Heart right ventricle (tissue), 16 donors: ENCODE measurements at regions of chr17 and their contacts with region 1.

Region 1: GRCh38 chr17:12256380-12256995 is 235.8 kb downstream of the MAP2K4 start:
- DNase-seq: peak in 1 of 2 donors; percentile 15
- ATAC-seq: peak; percentile 56 to 83 (median 78)
- H3K4me3 ChIP-seq: no peak overlapping the region
- H3K27ac ChIP-seq: no peak overlapping the region
- H3K4me1 ChIP-seq: peaks cover 0 to 18% (median 0%) of the 10 kb centered on the region in 9 donors
- H3K27me3 ChIP-seq: no peaks in the 10 kb centered on the region
- CTCF ChIP-seq: peak; percentile 57 to 82 (median 73)

Region 2: DNA sequence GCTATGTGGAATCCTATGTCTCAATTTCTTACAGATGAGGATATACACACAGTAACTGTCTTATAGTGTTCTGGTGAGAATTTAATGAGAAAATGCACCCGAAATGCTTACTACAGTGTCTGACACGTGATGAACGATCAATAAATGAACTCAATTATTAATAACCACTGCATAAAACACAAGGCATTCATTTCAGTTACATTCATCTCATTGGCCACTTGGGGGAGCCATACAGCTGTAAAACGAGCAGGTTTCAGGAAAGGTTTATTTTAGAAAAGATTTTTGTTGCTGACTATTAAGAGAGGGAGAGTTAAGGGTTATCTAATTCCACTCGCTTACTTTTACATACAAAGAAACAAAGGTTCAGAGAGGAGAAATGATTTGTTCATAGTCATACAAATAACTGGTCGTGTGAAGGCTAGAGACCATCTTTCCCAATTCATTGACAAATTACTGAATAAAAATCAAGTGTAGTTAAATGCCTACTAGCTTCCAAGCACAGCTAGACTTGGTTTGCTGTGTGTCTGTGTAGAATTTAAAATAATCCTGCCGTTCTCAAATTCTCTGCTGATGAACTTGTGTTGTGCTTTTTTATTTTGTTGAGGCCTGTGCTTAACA is 75.7 kb before region 1 on chr17:
- intact Hi-C with region 1: loop called in 2 of 10 experiments (anchors 10 kb)
- DNase-seq: peak in 1 of 2 donors; percentile 36
- ATAC-seq: peak in 2 of 8 donors; percentile 31 to 56
- H3K4me3 ChIP-seq: no peak overlapping the region
- H3K27ac ChIP-seq: no peak overlapping the region
- H3K4me1 ChIP-seq: no peaks in the 10 kb centered on the region
- H3K27me3 ChIP-seq: no peaks in the 10 kb centered on the region
- CTCF ChIP-seq: peak; percentile 48 to 79 (median 73)

Region 3: GRCh38 chr17:12545877-12546513 is 289.5 kb after region 1 on chr17:
- intact Hi-C with region 1: loop called in 6 of 10 experiments (anchors 5 to 10 kb)
- DNase-seq: peak in 1 of 2 donors; percentile 31
- ATAC-seq: peak; percentile 73 to 90 (median 84)
- H3K4me3 ChIP-seq: no peak overlapping the region
- H3K27ac ChIP-seq: no peak overlapping the region
- H3K4me1 ChIP-seq: peaks cover 0 to 11% (median 0%) of the 10 kb centered on the region in 9 donors
- H3K27me3 ChIP-seq: no peaks in the 10 kb centered on the region
- CTCF ChIP-seq: peak; percentile 45 to 78 (median 72)

Region 4: GRCh38 chr17:12730931-12731521 is 474.5 kb after region 1 on chr17:
- intact Hi-C with region 1: loop called in 1 of 10 experiments (anchors 10 kb)
- DNase-seq: peak; percentile 79 to 87
- ATAC-seq: peak; percentile 75 to 92 (median 84)
- H3K4me3 ChIP-seq: no peak overlapping the region
- H3K27ac ChIP-seq: peak overlapping the region; percentile 60 to 91 (median 80)
- H3K4me1 ChIP-seq: peaks cover 0 to 58% (median 24%) of the 10 kb centered on the region in 9 donors
- H3K27me3 ChIP-seq: no peaks in the 10 kb centered on the region
- CTCF ChIP-seq: no peak

Region 5: DNA sequence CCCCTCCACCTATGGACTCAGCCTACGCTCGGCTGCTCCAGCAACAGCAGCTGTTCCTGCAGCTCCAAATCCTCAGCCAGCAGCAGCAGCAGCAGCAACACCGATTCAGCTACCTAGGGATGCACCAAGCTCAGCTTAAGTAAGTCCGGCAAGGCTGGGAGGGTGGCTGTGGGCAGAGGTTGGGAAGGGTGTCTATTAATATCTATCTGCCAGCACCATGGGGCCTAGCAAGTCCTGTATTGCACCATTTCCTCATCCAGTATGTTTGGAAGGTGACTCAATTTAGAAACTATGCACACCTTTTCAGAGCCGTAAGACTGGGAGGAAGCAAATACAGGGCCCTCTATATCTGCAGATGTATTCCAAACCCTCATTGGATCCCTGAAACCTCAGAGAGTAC is 487.8 kb after region 1 on chr17:
- intact Hi-C with region 1: loop called in 5 of 10 experiments (anchors 5 to 10 kb)
- DNase-seq: peak; percentile 43 to 68
- ATAC-seq: peak; percentile 70 to 97 (median 91)
- H3K4me3 ChIP-seq: peak overlapping the region in 8 of 10 donors; percentile 1 to 38 (median 14)
- H3K27ac ChIP-seq: peak overlapping the region; percentile 24 to 87 (median 79)
- H3K4me1 ChIP-seq: peaks cover 0 to 23% (median 7%) of the 10 kb centered on the region in 9 donors
- H3K27me3 ChIP-seq: no peaks in the 10 kb centered on the region
- CTCF ChIP-seq: no peak

Region 6: DNA sequence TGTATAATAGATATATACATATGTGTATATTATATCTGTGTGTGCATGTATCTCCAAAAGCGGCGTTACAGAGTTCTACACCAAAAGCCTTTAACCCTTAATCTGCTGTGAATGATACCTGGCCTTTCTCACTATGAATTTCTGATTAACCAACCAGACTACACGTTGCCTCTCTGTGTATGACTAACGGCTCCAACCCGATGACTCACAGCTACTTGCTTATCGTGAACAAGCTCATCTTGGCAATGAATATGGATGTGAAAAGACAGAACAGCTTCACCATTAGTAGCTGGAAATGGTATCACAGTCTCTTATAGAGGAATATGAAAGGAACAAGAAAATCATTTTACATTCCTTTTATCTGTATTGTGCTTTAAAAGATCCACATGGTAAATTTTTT is 509.1 kb after region 1 on chr17:
- intact Hi-C with region 1: loop called in 1 of 10 experiments (anchors 10 kb)
- DNase-seq: peak in 1 of 2 donors; percentile 48
- ATAC-seq: peak; percentile 31 to 93 (median 70)
- H3K4me3 ChIP-seq: no peak overlapping the region
- H3K27ac ChIP-seq: peak overlapping the region in 1 of 10 donors; percentile 25
- H3K4me1 ChIP-seq: peaks cover 0 to 13% (median 3%) of the 10 kb centered on the region in 9 donors
- H3K27me3 ChIP-seq: no peaks in the 10 kb centered on the region
- CTCF ChIP-seq: no peak